ENCODE measurements at regions of chr5 and their contacts with region 1.

Region 1: DNA sequence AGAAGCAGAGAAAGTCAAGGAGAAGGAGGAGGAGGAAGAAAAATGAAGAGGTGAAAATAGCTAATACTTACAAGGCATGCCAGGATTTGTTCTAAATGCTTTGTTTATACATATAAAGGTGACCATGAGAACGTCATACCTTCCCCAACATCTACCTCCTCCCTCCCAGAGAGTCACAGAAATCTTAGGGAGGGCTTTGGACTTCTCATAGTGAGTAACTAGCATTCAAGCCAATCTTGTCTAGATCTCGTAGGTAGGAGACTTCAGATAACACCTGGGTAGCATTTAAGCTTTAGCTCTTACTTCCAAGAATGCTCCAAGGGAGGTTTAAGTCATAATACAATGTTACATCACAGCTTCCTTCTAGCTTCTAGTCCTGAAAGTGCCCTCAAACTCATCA is 36.5 kb upstream of the GPBP1 start:
- DNase-seq: no peak
- H3K4me3 ChIP-seq: no peak overlapping the region
- H3K27ac ChIP-seq: no peak overlapping the region
- H3K27me3 ChIP-seq: no peaks in the 10 kb centered on the region
- CTCF ChIP-seq: no peak

Region 2: GRCh38 chr5:56270568-56271392 is 866.6 kb before region 1 on chr5:
- CTCF ChIA-PET with region 1: interaction called, 10 read pairs
- POLR2A ChIA-PET with region 1: no interaction called
- DNase-seq: peak; percentile 81
- H3K4me3 ChIP-seq: no peak overlapping the region
- H3K27ac ChIP-seq: no peak overlapping the region
- H3K27me3 ChIP-seq: no peaks in the 10 kb centered on the region
- CTCF ChIP-seq: peak; percentile 99

Region 3: DNA sequence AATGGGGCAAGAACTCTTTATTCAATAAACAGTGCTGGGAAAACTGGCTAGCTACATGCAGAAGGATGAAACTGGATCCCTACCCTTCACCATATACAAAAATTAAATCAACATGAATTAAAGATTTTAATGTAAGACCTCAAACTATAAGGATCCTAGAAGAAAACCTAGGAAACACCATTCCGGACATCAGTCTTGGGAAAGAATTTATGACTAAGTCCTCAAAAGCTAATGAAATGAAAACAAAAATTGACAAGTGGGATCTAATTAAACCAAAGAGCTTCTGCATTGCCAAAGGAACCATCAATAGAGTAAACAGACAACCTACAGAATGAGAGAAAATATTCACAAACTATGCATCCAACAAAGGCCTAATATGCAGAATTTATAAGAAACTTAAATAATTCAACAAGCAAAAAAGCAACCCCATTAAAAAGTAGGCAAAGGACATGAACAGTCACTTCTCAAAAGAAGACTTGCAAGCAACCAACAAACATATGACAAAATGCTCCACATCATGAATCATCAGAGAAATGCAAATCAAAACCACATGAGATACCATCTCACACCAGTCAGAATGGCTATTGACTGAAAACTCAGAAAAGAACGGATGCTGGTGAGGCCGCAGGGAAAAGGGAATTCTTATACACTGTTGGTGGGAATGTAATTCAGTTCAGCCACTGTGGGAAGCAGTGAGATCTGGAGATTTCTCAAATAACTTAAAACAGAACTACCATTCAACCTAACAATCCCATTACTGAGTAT is 426.4 kb before region 1 on chr5:
- CTCF ChIA-PET with region 1: interaction called, 12 read pairs
- POLR2A ChIA-PET with region 1: no interaction called
- DNase-seq: no peak
- H3K4me3 ChIP-seq: no peak overlapping the region
- H3K27ac ChIP-seq: no peak overlapping the region
- H3K27me3 ChIP-seq: peaks cover 4% of the 10 kb centered on the region
- CTCF ChIP-seq: no peak

Region 4: DNA sequence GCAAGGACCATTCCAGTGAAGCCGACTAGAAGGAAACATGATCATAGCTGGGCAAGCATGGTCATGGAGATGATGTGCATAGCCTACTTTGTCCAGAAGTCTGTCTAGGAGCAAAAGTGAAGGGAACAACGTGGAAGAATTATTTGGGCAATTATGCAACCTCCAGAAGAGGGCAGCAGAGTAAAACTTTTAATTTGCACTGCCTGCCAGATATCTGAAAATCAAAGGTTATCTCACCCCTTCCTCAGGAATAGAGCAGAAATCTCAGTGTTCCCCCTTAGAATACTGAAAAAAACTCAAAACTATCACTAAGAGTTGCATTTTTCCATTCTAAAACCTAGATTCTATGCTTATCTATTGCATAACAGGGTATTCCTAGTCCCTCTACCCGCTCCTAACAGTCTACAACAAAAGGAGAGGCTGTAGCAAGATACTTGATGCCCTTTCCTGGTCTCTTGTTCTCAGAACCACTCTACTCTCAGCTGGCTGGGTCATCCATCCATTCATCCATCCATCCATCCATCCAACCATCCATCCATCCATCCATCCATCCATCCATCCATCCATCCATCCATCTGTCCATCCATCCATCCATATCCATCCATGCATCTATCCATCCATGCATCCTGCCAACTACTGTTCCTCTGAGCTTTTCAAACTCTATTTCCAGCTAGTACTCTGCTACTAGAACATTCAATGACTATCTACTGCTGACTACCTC is 236.4 kb before region 1 on chr5:
- CTCF ChIA-PET with region 1: interaction called, 31 read pairs
- POLR2A ChIA-PET with region 1: no interaction called
- DNase-seq: no peak
- H3K4me3 ChIP-seq: no peak overlapping the region
- H3K27ac ChIP-seq: no peak overlapping the region
- H3K27me3 ChIP-seq: no peaks in the 10 kb centered on the region
- CTCF ChIP-seq: peak; percentile 64

Region 5: DNA sequence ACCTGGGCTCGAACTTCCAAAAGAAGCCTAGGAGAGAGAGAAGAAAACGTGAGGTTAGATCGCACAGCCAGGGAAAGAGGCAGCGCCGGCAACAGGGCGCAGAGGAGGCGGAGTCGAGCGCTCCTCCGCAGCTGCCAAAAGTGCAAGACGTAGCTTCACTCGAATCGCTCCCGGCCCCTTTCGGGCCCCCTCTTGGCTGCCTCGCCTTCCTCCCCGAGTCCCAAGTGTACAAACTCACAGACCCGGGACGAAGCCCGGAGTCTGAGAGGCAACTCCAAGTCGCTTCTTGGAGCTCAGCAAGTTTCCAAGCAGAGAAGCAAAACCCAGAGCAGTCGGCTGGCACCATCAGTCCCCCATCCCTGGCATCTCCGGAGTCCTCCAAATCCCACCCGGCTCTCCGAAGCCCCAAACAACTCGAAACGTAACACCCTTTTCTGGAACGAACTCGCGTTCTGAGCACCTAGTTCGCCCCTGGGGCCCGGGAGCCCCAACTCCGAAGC is 186.7 kb before region 1 on chr5:
- CTCF ChIA-PET with region 1: interaction called, 15 read pairs
- POLR2A ChIA-PET with region 1: no interaction called
- DNase-seq: peak; percentile 21
- H3K4me3 ChIP-seq: peak overlapping the region; percentile 77
- H3K27ac ChIP-seq: peak overlapping the region; percentile 63
- H3K27me3 ChIP-seq: peaks cover 2% of the 10 kb centered on the region
- CTCF ChIP-seq: no peak

Region 6: DNA sequence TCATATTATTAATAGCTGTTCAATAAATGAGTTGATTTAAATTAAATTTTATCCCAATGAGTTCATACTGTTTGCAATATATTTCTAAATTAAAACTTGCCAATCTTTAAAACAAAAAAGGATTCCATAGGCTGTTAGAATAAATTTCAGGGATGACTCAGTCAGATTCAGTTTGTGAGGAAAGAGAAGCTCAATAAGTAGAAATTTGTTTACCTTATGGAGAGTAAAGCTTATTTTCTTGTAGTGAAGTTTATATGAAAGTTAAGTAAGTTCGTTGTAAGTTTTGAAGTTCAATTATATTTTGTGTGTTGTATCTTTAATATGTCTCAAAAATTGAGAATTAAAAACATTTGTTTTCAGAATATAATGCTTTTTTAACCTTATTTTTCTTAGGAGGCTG is 65.4 kb after region 1 on chr5:
- CTCF ChIA-PET with region 1: interaction called, 12 read pairs
- POLR2A ChIA-PET with region 1: no interaction called
- DNase-seq: no peak
- H3K4me3 ChIP-seq: no peak overlapping the region
- H3K27ac ChIP-seq: peak overlapping the region; percentile 70
- H3K27me3 ChIP-seq: no peaks in the 10 kb centered on the region
- CTCF ChIP-seq: no peak

Region 7: DNA sequence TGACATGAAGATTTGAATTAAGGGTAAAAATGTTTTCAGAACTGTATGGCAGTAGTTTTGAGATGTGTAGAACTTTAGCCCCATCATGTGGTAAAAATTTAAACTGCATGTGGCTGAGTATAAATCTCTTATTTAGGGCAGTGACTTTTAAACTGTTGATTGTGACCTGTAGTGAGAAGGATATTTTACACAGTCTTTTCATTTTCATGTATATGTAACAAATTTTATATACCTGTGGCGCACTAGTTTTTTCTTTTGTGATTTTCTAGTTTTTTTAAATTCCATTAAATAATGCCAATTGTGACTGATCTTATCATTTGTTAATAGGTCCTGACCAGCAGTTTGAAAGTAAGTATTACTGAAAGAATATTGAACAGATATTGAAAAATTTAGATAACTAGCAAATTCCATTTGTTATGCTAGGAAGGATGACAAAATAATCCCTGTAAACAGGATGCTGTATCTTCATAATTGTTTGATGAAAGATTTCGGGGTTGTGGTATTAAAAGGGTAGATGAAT is 83.7 kb after region 1 on chr5:
- CTCF ChIA-PET with region 1: interaction called, 24 read pairs
- POLR2A ChIA-PET with region 1: no interaction called
- DNase-seq: no peak
- H3K4me3 ChIP-seq: no peak overlapping the region
- H3K27ac ChIP-seq: no peak overlapping the region
- H3K27me3 ChIP-seq: no peaks in the 10 kb centered on the region
- CTCF ChIP-seq: peak; percentile 81